ENCODE measurements at regions of chr2 and their contacts with region 1.

Region 1: DNA sequence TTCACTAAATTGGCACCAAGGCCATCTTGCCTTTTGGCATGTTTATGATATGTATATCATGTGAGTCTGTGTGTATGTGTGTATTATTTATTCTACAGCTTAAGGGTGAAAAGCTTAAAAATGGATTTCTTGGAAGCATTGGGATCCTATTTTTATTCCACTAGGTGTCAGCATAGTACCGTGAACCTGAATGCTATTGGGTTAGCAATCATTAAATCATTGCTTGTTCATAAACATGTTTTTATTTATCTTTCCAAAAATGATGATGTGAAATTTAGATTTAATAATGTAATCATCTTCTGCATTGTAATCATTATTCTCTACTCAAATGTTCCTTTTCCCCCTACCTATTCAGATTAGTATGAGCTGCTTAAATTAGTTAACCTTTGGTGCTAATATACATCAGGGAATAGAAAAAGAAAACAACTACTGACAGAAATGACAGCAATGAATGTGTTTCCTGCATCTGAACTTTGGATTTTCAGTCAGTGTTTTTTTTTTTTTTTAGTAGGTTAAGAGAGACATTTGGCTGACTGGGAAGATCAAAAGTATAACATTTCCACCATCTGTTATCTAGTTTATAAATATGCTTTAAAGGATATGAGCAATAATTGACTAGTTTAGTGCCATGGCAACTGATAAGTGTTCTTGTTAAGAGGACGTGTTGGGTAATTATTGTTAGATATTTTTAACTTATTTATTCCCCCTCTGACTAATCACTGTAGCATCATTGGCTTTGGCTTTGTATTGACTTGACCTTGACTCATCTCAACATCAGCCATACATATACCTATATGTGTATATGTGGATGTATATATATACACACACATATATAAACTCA is 14.1 kb upstream of the ZSWIM2 start:
- DNase-seq: no peak
- H3K4me3 ChIP-seq: no peak overlapping the region
- H3K27ac ChIP-seq: no peak overlapping the region
- H3K4me1 ChIP-seq: no peaks in the 10 kb centered on the region
- H3K27me3 ChIP-seq: no peaks in the 10 kb centered on the region
- CTCF ChIP-seq: peak; percentile 47 to 57 (median 52)
- EP300 ChIP-seq: no peak
- POLR2A ChIP-seq: no peak

Region 2: DNA sequence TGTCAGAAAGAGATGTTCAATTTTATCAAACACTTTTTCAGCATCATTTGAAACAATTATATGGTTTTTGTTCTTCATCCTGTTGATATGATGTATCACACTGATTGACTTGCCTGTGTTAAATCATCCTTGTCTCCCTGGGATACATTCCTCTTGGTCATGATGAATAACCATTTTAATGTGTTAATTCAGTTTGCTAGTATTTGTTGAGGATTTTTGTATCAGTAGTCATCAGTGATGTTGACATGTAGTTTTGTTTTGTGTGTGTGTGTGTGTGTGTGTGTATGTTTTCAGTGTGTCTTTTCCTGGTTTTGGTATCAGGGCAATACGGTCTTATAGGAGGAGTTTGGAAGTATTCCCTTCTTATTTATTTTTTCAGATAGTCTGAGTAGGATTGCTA is 1939.3 kb before region 1 on chr2:
- in situ Hi-C with region 1: no loop called
- intact Hi-C with region 1: no loop called
- DNase-seq: no peak
- H3K4me3 ChIP-seq: no peak overlapping the region
- H3K27ac ChIP-seq: no peak overlapping the region
- H3K4me1 ChIP-seq: no peaks in the 10 kb centered on the region
- H3K27me3 ChIP-seq: no peaks in the 10 kb centered on the region
- CTCF ChIP-seq: no peak
- EP300 ChIP-seq: no peak
- POLR2A ChIP-seq: no peak

Region 3: GRCh38 chr2:187429989-187430388 is 566.9 kb after region 1 on chr2:
- in situ Hi-C with region 1: loop called in 2 of 4 experiments (anchors 25 kb)
- intact Hi-C with region 1: no loop called
- DNase-seq: no peak
- H3K4me3 ChIP-seq: no peak overlapping the region
- H3K27ac ChIP-seq: no peak overlapping the region
- H3K4me1 ChIP-seq: no peaks in the 10 kb centered on the region
- H3K27me3 ChIP-seq: no peaks in the 10 kb centered on the region
- CTCF ChIP-seq: no peak
- EP300 ChIP-seq: no peak
- POLR2A ChIP-seq: no peak

Region 4: GRCh38 chr2:187453078-187453641 is 590.1 kb after region 1 on chr2:
- in situ Hi-C with region 1: loop called (anchors 10 to 25 kb)
- intact Hi-C with region 1: no loop called
- DNase-seq: no peak
- H3K4me3 ChIP-seq: no peak overlapping the region
- H3K27ac ChIP-seq: no peak overlapping the region
- H3K4me1 ChIP-seq: no peaks in the 10 kb centered on the region
- H3K27me3 ChIP-seq: no peaks in the 10 kb centered on the region
- CTCF ChIP-seq: peak in 4 of 5 experiments; percentile 17 to 48 (median 33)
- EP300 ChIP-seq: no peak
- POLR2A ChIP-seq: no peak

Measured in transverse colon (tissue), 4 donors.